Astrocyte of the cerebellum (primary cell): ENCODE measurements at regions of chr17 and their contacts with region 1.

Region 1: DNA sequence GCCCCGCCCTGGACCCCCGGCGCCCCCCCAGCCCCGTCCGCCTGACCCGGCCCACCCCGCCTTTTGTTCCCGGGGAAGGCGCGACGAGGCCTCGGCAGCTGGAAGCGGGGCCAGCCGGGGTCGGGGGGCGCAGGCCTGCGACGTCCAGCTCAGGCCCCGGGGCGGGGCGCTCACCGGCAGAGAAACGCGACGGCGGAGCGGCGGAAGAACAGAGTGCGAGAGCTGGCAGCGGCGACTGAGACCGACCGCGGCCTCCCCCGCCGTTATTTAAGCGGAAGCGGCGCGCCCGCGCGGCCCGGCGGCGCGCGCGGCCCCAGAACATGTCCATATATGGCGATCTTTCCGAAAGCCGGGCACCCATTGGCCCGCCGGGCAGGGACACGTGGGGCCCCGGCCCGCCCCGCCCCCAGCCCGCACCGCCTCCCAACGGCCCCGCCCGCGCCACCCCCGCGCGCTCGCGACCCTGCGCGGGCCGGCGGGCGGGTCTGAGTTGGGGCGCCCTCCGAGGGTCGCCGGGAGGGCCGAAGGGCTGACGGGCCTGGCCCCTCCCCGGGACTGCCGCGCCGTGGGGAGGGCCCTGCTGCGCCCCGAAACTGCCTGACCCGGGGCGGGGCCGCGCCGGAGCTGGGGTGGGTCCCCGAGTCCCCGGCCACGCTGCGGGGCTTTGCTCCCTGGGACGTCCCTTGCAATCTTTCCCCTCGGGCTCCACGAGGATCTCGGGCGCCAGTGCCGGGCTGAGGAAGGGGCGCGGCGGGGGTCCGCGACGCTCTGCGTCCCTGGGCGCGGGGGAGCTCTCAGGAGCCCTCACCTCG is at the start of gene ACTG1:
- DNase-seq: peak; percentile 78
- H3K4me3 ChIP-seq: peak within 1 kb of the TSS; percentile 97
- CTCF ChIP-seq: no peak

Region 2: DNA sequence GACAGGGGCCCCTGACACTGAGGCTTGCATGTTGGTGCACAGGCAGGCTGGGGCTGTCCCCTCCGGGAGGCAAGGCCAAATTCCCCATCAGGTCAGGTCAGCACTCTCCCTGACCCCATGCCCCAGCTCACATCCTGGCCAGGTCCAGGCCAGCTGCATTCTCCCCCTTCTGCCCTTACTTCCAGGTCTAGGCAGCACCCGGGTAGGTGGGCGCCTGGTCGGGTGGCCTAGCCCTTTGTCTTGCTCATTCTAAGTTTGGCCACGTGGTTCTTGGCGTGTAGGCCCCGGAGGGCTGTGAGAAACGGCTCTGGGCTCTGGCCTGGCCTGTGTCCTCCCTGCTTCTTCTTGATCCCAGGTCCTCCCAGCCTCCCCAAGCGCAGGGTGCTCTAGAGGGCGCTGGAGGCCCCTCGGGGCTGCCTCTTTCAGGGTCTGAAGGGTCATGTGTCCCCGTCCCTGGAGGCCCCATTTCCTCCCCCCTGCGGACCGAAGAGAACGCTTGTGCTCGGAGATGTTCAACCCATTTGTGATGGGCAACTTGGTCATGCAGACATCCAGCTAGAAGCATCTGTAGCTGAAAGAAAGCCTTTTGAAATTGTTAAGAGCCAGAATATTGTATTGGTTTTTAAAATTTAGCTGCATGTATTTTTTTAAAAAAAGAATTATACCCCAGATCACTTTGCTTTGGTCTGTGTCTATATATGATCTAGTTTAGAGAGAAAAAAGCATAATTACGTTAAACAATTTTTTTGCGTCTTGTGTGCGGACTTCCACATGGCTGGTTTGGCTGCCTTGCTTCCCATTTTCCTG is 110.8 kb before region 1 on chr17:
- in situ Hi-C with region 1: loop called (anchors 5 kb)
- DNase-seq: no peak
- H3K4me3 ChIP-seq: peak overlapping the region; percentile 50
- CTCF ChIP-seq: peak; percentile 53

Region 3: GRCh38 chr17:81566461-81567126 is 53.8 kb after region 1 on chr17:
- in situ Hi-C with region 1: loop called (anchors 5 kb)
- DNase-seq: peak; percentile 96
- H3K4me3 ChIP-seq: no peak overlapping the region
- CTCF ChIP-seq: no peak